Activated CD4-positive, alpha-beta T cell treated with anti-CD3 and anti-CD28 coated beads for 36 hours (primary cell): ENCODE measurements at regions of chr11 and their contacts with region 1.

Region 1: DNA sequence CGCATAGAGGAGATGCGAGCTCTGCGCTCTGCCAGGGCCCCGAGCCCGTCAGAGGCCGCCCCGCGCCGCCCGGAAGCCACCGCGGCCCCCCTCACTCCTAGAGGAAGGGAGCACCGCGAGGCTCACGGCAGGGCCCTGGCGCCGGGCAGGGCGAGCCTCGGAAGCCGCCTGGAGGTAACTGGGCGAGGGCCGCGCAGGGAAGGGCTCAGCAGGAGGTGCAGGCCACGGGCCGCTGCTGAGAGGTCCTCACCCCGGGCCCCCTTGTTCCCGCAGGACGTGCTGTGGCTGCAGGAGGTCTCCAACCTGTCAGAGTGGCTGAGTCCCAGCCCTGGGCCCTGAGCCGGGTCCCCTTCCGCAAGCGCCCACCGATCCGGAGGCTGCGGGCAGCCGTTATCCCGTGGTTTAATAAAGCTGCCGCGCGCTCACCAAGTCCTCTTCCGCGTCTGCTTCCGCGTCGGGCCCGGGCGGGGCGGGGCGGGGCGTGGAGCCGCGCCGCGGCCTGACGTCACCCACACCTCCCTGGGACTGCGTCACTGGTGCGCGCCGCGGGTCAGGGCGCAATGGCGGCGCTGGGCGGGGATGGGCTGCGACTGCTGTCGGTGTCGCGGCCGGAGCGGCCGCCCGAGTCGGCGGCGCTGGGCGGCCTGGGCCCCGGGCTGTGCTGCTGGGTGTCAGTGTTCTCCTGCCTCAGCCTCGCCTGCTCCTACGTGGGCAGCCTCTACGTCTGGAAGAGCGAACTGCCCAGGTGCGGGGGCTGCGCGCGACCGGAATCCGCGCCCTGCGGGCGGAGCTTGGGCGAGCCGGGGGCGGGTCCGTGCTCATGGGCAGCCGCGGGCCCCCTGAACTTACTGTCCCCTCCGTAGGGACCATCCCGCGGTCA is at the start of gene RCE1:
- DNase-seq: peak; percentile 95
- ATAC-seq: peak; percentile 85
- H3K4me3 Mint-ChIP-seq: peak within 1 kb of the TSS; percentile 92
- H3K27ac Mint-ChIP-seq: peak within 1 kb of the TSS; percentile 92
- H3K4me1 Mint-ChIP-seq: peaks cover 51% of the 10 kb centered on the region
- H3K27me3 Mint-ChIP-seq: no peaks in the 10 kb centered on the region
- total RNA-seq, gene RCE1: 24.9 to 25.6 TPM

Region 2: GRCh38 chr11:66288671-66289547 is 554.2 kb before region 1 on chr11 and contains the start of gene YIF1A:
- CTCF ChIA-PET with region 1: no interaction called
- POLR2A ChIA-PET with region 1: interaction called, 10 read pairs
- intact Hi-C with region 1: no loop called
- DNase-seq: peak; percentile 99
- ATAC-seq: peak; percentile 97
- H3K4me3 Mint-ChIP-seq: peak within 1 kb of the TSS; percentile 89
- H3K27ac Mint-ChIP-seq: peak within 1 kb of the TSS; percentile 85
- H3K4me1 Mint-ChIP-seq: peaks cover 22% of the 10 kb centered on the region
- H3K27me3 Mint-ChIP-seq: peaks cover 8% of the 10 kb centered on the region
- total RNA-seq, gene YIF1A: 47.5 to 49.8 TPM

Region 3: GRCh38 chr11:66466225-66467027 is 376.7 kb before region 1 on chr11 and contains the start of gene PELI3:
- CTCF ChIA-PET with region 1: no interaction called
- POLR2A ChIA-PET with region 1: no interaction called
- intact Hi-C with region 1: loop called in 1 of 2 experiments (anchors 1 kb)
- DNase-seq: peak; percentile 98
- ATAC-seq: peak; percentile 88
- H3K4me3 Mint-ChIP-seq: peak within 1 kb of the TSS; percentile 85
- H3K27ac Mint-ChIP-seq: peak within 1 kb of the TSS; percentile 79
- H3K4me1 Mint-ChIP-seq: peaks cover 38% of the 10 kb centered on the region
- H3K27me3 Mint-ChIP-seq: no peaks in the 10 kb centered on the region
- total RNA-seq, gene PELI3: 5.7 to 7.0 TPM

Region 4: DNA sequence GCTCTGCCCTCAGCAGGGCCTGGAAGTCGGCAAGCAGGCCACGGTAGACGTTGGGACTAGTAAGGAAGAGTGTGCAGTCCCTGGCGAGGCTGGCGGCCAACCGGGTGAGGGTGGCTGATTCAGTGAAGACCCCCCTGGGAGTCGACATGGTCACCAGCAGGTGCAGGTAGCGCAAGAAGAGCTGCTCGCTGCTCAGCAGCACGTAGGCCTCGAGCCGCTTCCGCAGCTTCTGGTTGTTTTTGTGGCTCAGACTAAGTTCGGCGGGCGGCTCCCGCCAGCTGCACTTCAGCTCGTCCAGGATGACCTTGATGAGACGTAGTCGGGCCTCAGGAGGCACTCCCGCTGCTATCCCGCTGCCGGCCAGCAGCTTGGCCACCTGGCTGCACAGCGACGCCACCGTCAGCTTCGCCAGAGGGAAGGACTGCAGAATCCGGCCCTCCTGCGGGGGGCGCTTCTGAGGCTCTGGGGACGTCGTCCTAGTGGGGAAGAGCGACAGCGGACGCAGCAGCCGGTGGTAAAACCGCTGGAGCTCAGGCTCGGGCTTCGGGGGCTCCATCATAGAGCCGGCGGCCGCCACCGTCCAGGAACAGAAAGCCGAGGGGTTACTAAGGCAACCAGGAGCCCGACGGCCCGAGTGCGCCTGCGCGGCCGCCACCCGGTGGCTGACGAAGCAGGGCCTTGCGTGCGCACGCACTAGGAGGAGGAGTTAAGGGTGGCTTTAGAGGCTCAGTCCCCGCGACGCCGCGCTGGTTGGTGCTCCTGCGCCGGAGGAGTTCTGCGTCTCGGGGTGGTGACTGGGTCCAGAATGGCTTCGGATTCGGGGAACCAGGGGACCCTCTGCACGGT is 250.5 kb before region 1 on chr11 and contains the starts of genes CCDC87 and CCS:
- CTCF ChIA-PET with region 1: no interaction called
- POLR2A ChIA-PET with region 1: no interaction called
- intact Hi-C with region 1: loop called (anchors 1 to 2 kb)
- DNase-seq: peak; percentile 99
- ATAC-seq: peak; percentile 100
- H3K4me3 Mint-ChIP-seq: peak within 1 kb of the TSS; percentile 93
- H3K27ac Mint-ChIP-seq: peak within 1 kb of the TSS; percentile 98
- H3K4me1 Mint-ChIP-seq: peaks cover 19% of the 10 kb centered on the region
- H3K27me3 Mint-ChIP-seq: no peaks in the 10 kb centered on the region
- total RNA-seq, gene CCDC87: 0.09 to 0.14 TPM
- total RNA-seq, gene CCS: 16.3 to 24.0 TPM

Region 5: GRCh38 chr11:66727282-66727882 is 115.8 kb before region 1 on chr11:
- CTCF ChIA-PET with region 1: no interaction called
- POLR2A ChIA-PET with region 1: no interaction called
- intact Hi-C with region 1: no loop called
- DNase-seq: peak; percentile 45
- ATAC-seq: peak; percentile 47
- H3K4me3 Mint-ChIP-seq: peak overlapping the region; percentile 56
- H3K27ac Mint-ChIP-seq: no peak overlapping the region
- H3K4me1 Mint-ChIP-seq: peaks cover 11% of the 10 kb centered on the region
- H3K27me3 Mint-ChIP-seq: peaks cover 44% of the 10 kb centered on the region

Region 6: DNA sequence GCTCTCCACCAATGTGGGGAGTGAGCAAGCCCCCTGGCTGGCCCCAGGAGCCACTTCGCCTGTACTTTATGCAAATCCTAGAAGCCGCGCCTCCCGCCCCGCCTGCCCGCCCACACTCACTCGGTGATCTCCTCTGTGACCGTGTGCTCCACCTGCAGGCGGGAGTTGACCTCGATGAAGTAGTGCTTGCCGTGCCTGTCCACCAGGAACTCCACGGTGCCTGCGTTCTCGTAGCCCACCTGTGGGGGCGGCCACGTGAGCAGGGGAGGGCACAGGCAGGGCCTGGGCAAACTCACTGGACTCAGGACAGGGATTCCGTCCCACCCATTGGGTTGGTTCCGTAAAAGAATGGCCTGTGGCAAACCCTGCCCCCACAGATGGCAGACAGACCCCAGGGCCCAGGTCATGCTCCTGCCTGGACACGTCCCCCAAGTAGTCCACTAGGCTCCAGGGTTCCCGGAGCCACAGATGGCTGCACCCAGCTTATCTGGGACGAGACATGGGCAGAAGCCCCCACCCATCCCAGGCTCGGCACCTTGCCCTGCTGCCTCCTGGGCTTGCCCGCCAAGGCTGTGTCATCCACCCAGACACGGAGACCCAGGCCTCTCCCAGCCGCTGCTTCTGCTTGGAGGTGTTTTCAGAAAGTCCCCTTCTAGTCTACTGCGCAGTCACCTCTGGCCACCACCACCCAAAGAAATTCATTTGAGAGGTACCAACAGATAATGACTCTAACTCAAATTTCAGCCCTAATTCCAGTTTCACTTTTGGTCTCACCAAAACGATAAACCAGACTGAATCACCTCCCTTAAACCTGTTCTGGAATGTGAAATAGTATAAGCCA is 25.8 kb after region 1 on chr11:
- CTCF ChIA-PET with region 1: interaction called, 3 read pairs
- POLR2A ChIA-PET with region 1: no interaction called
- intact Hi-C with region 1: loop called in 1 of 2 experiments (anchors 1 kb)
- DNase-seq: peak; percentile 93
- ATAC-seq: peak; percentile 97
- H3K4me3 Mint-ChIP-seq: no peak overlapping the region
- H3K27ac Mint-ChIP-seq: peak overlapping the region; percentile 51
- H3K4me1 Mint-ChIP-seq: peaks cover 16% of the 10 kb centered on the region
- H3K27me3 Mint-ChIP-seq: no peaks in the 10 kb centered on the region

Region 7: GRCh38 chr11:66981976-66982578 is 138.9 kb after region 1 on chr11:
- CTCF ChIA-PET with region 1: no interaction called
- POLR2A ChIA-PET with region 1: no interaction called
- intact Hi-C with region 1: no loop called
- DNase-seq: peak; percentile 56
- ATAC-seq: no peak
- H3K4me3 Mint-ChIP-seq: no peak overlapping the region
- H3K27ac Mint-ChIP-seq: no peak overlapping the region
- H3K4me1 Mint-ChIP-seq: peaks cover 5% of the 10 kb centered on the region
- H3K27me3 Mint-ChIP-seq: peaks cover 3% of the 10 kb centered on the region

Region 8: GRCh38 chr11:67606492-67607201 is 763.5 kb after region 1 on chr11 and contains the start of gene NDUFV1:
- CTCF ChIA-PET with region 1: no interaction called
- POLR2A ChIA-PET with region 1: no interaction called
- intact Hi-C with region 1: loop called in 1 of 2 experiments (anchors 5 kb)
- DNase-seq: peak; percentile 98
- ATAC-seq: peak; percentile 100
- H3K4me3 Mint-ChIP-seq: peak within 1 kb of the TSS; percentile 92
- H3K27ac Mint-ChIP-seq: peak within 1 kb of the TSS; percentile 90
- H3K4me1 Mint-ChIP-seq: peaks cover 16% of the 10 kb centered on the region
- H3K27me3 Mint-ChIP-seq: peaks cover 9% of the 10 kb centered on the region
- total RNA-seq, gene NDUFV1: 253 to 287 TPM